GM12878 (cell line): ENCODE measurements at regions of chr4 and their contacts with region 1.

Region 1: DNA sequence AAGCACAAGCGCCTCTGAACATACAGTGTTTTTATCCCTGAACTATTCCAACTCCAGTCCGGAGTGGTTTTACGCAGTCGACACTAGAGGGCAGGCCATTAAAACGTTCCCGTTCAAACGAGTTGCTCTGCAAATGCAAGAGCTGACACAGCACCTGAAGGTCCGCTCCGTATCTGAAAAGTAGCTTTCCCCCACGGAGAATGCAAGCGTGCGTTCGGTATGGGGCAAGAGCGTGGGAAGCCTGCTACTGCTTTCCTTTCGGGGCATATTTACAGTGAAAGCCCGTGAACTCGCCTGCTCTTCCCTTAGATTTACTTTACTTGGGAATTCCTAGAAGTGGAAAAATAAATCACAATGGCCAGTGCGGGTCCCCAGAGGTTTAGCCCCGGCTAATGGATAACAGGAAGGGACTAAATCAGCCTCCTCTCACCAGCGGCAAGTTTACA is 190.8 kb downstream of the TSPAN5 start:
- DNase-seq: no peak
- ATAC-seq: peak; percentile 98
- H3K4me3 ChIP-seq: no peak overlapping the region
- H3K27ac ChIP-seq: no peak overlapping the region
- H3K4me1 ChIP-seq: no peaks in the 10 kb centered on the region
- H3K27me3 ChIP-seq: peaks cover 0 to 2% of the 10 kb centered on the region in 2 experiments; a peak in 1 of 4 replicates
- CTCF ChIP-seq: peak; percentile 74 to 90 (median 76)
- EP300 ChIP-seq: no peak
- POLR2A ChIP-seq: no peak
- RAD21 ChIP-seq: peak; percentile 95

Region 2: DNA sequence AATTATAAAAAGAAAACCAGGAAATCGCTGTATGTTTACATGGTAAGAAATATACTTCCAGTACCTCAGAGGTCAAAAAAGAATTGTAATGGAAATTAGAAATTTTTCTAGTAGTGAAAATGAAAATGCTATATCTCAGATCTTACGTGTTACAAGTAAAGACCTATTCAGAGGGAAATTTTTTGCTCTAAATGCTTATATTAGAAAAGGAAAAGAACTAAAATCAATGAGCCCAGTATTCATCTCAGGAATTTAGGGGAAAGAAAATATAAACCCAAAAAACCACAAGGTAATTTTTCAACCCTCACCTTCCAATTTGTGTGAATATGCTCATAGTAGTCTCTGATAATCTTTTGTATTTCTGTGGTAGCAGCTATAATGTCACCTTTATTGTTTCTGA is 60.8 kb before region 1 on chr4:
- CTCF ChIA-PET with region 1: no interaction called
- POLR2A ChIA-PET with region 1: no interaction called
- RAD21 ChIA-PET with region 1: no interaction called
- SMC1A ChIA-PET with region 1: no interaction called
- in situ Hi-C with region 1: no loop called
- intact Hi-C with region 1: no loop called
- DNase-seq: no peak
- ATAC-seq: peak; percentile 81
- H3K4me3 ChIP-seq: no peak overlapping the region
- H3K27ac ChIP-seq: no peak overlapping the region
- H3K4me1 ChIP-seq: no peaks in the 10 kb centered on the region
- H3K27me3 ChIP-seq: no peaks in the 10 kb centered on the region
- CTCF ChIP-seq: no peak
- EP300 ChIP-seq: no peak
- POLR2A ChIP-seq: no peak
- RAD21 ChIP-seq: no peak

Region 3: GRCh38 chr4:98433691-98434090 is 34.0 kb before region 1 on chr4:
- CTCF ChIA-PET with region 1: no interaction called
- POLR2A ChIA-PET with region 1: no interaction called
- RAD21 ChIA-PET with region 1: no interaction called
- SMC1A ChIA-PET with region 1: no interaction called
- in situ Hi-C with region 1: no loop called
- intact Hi-C with region 1: no loop called
- DNase-seq: no peak
- ATAC-seq: no peak
- H3K4me3 ChIP-seq: no peak overlapping the region
- H3K27ac ChIP-seq: no peak overlapping the region
- H3K4me1 ChIP-seq: no peaks in the 10 kb centered on the region
- H3K27me3 ChIP-seq: no peaks in the 10 kb centered on the region
- CTCF ChIP-seq: no peak
- EP300 ChIP-seq: no peak
- POLR2A ChIP-seq: no peak
- RAD21 ChIP-seq: no peak

Region 4: DNA sequence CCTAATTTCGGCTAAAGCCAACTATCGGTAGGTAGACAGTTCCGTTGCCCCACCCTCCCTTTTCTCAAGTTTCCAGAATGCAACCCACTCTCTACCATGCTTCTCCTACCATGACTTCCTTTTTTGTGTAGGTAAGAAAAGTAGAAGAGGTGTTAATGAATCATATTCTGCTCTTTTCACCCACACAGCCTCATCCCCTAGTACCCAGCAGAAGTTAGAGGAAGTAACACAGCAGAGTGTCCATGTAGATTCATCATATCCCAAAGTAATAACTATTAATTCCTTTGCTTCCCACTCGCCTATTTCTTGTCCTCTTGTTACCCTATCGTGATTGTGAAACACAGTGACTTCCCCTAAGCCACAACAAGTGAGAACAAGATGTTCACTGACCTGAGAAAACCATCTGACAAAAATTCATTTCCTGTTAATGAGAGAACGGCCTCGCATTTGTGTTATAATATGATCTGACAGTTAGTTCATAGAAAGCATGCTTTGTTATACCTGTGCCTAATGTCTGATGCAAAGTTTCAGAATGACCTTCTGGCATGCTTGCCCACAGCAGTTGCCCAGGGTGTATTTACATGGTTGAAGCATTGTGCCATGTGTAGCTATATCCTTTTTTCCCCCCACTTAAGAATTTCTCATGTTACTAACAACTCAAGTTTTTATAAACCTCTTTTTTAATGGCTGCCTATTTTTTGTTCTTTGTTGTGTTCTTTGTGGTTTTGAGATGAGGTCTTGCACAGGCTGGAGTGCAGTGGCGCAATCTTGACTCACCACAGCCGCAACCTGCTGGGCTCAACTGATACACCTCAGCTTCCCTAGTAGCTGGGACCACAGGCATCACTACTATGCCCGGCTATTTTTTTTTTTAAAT is 20.9 kb before region 1 on chr4:
- CTCF ChIA-PET with region 1: interaction called, 21 read pairs
- POLR2A ChIA-PET with region 1: no interaction called
- RAD21 ChIA-PET with region 1: interaction called, 4 read pairs
- SMC1A ChIA-PET with region 1: interaction called, 7 read pairs
- in situ Hi-C with region 1: no loop called
- intact Hi-C with region 1: no loop called
- DNase-seq: peak; percentile 61
- ATAC-seq: peak; percentile 93
- H3K4me3 ChIP-seq: no peak overlapping the region
- H3K27ac ChIP-seq: peak overlapping the region; percentile 36
- H3K4me1 ChIP-seq: peaks cover 17% of the 10 kb centered on the region
- H3K27me3 ChIP-seq: no peaks in the 10 kb centered on the region
- CTCF ChIP-seq: no peak
- EP300 ChIP-seq: peak in 1 of 2 experiments; percentile 68; a peak in 2 of 4 replicates
- POLR2A ChIP-seq: no peak
- RAD21 ChIP-seq: no peak

Region 5: DNA sequence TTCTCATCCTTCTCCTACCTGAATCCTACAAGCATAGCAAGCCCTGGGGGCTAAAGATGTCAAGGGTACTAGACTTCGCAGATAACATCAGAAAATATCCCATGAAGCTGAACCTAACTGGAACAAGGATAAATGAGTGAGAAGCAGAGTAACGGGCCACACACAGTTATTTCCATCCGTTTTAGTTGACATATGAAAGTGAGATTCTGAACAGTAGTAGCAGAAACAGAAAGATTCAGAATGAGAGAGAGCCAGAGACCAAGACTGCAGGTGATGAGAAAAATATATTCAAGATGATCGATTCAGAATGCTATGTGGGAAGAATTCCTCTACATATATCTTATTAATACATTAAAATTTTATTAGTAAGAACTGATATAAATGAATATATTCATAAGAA is 25.6 kb after region 1 on chr4:
- CTCF ChIA-PET with region 1: interaction called, 10 read pairs
- POLR2A ChIA-PET with region 1: no interaction called
- RAD21 ChIA-PET with region 1: interaction called, 7 read pairs
- SMC1A ChIA-PET with region 1: interaction called, 7 read pairs
- in situ Hi-C with region 1: no loop called
- intact Hi-C with region 1: no loop called
- DNase-seq: no peak
- ATAC-seq: peak; percentile 77
- H3K4me3 ChIP-seq: no peak overlapping the region
- H3K27ac ChIP-seq: no peak overlapping the region
- H3K4me1 ChIP-seq: no peaks in the 10 kb centered on the region
- H3K27me3 ChIP-seq: no peaks in the 10 kb centered on the region
- CTCF ChIP-seq: no peak
- EP300 ChIP-seq: no peak
- POLR2A ChIP-seq: no peak
- RAD21 ChIP-seq: no peak

Region 6: DNA sequence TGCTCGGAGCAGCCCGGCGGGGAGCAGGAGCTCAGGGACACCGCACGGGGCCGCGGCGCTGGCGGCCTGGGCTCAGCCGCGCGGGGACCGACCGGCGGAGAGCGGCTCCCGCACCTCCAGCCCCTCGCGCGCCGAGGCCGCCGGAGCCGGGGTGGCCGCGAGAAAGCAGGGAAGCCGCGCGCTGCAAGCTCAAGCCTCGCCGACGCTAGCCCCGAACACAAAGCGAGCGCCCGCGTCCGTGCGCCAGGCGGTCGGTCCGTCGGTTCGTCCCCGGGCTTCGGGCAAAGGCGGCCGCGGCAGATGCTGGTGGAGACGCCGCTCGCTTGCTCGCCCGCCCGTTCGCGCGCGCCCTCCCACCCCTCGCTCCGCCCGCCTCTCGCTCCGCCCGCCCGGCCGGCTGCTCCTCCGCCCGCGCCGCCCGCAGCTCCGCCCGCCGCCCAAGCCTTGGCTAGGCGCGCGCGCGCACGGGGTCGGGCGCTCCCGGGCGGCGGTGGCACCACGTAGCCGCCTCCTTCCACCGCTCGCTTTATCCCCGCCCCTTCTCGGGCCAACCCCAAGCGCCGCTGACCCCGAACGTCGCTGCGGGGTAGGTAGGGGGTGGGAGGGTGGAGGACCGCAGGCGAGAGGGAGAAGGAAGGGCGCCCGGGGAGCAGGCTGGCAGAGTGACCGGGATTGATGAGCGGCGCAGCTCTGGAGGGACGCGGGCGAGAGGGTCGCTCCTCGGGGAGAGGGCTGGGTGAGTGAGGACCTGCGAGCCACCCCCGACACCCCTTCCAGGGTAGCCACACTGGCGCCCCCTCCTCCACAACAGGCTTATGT is 190.8 kb after region 1 on chr4 and contains the start of gene TSPAN5:
- CTCF ChIA-PET with region 1: interaction called, 16 read pairs
- POLR2A ChIA-PET with region 1: no interaction called
- RAD21 ChIA-PET with region 1: interaction called, 9 read pairs
- SMC1A ChIA-PET with region 1: interaction called, 5 read pairs
- in situ Hi-C with region 1: no loop called
- intact Hi-C with region 1: no loop called
- DNase-seq: no peak
- ATAC-seq: peak; percentile 84
- H3K4me3 ChIP-seq: peak within 1 kb of the TSS; percentile 65
- H3K27ac ChIP-seq: no peak within 1 kb of the TSS
- H3K4me1 ChIP-seq: peaks cover 10% of the 10 kb centered on the region
- H3K27me3 ChIP-seq: peaks cover 4 to 23% of the 10 kb centered on the region in 2 experiments
- CTCF ChIP-seq: no peak
- EP300 ChIP-seq: no peak
- POLR2A ChIP-seq: peak; percentile 33; the same call in 1 of the 2 replicates
- RAD21 ChIP-seq: no peak
- polyA plus RNA-seq, gene TSPAN5: 0.22 to 0.23 TPM

Region 7: GRCh38 chr4:99054428-99054994 is 586.9 kb after region 1 on chr4:
- CTCF ChIA-PET with region 1: interaction called, 21 read pairs
- POLR2A ChIA-PET with region 1: no interaction called
- RAD21 ChIA-PET with region 1: interaction called, 17 read pairs
- SMC1A ChIA-PET with region 1: interaction called, 18 read pairs
- in situ Hi-C with region 1: no loop called
- intact Hi-C with region 1: loop called (anchors 2 kb)
- DNase-seq: peak; percentile 26
- ATAC-seq: peak; percentile 79
- H3K4me3 ChIP-seq: no peak overlapping the region
- H3K27ac ChIP-seq: no peak overlapping the region
- H3K4me1 ChIP-seq: peaks cover 10% of the 10 kb centered on the region
- H3K27me3 ChIP-seq: no peaks in the 10 kb centered on the region
- CTCF ChIP-seq: no peak
- EP300 ChIP-seq: 0 out of 4 replicates have a peak, but pooled peaks of 1 of the 2 experiments have one; percentile 41
- POLR2A ChIP-seq: no peak
- RAD21 ChIP-seq: no peak